Endothelial cell of umbilical vein (primary cell): ENCODE measurements at regions of chr17 and their contacts with region 1.

Region 1: GRCh38 chr17:32755045-32755805 is 121.7 kb downstream of the MYO1D start:
- DNase-seq: peak; percentile 84
- H3K4me3 ChIP-seq: no peak overlapping the region
- H3K27ac ChIP-seq: no peak overlapping the region
- H3K4me1 ChIP-seq: no peaks in the 10 kb centered on the region
- H3K27me3 ChIP-seq: no peaks in the 10 kb centered on the region
- CTCF ChIP-seq: peak; percentile 26 to 37
- POLR2A ChIP-seq: no peak

Region 2: GRCh38 chr17:32461853-32462617 is 293.2 kb before region 1 on chr17:
- CTCF ChIA-PET with region 1: interaction called, 37 read pairs
- POLR2A ChIA-PET with region 1: no interaction called
- dilution Hi-C with region 1: no loop called
- intact Hi-C with region 1: loop called (anchors 1 kb)
- DNase-seq: peak; percentile 69
- H3K4me3 ChIP-seq: no peak overlapping the region
- H3K27ac ChIP-seq: no peak overlapping the region
- H3K4me1 ChIP-seq: no peaks in the 10 kb centered on the region
- H3K27me3 ChIP-seq: no peaks in the 10 kb centered on the region
- CTCF ChIP-seq: peak; percentile 59 to 67
- POLR2A ChIP-seq: no peak

Region 3: GRCh38 chr17:32769839-32770238 is 14.6 kb after region 1 on chr17:
- CTCF ChIA-PET with region 1: interaction called, 12 read pairs
- POLR2A ChIA-PET with region 1: no interaction called
- dilution Hi-C with region 1: no loop called
- intact Hi-C with region 1: no loop called
- DNase-seq: no peak
- H3K4me3 ChIP-seq: no peak overlapping the region
- H3K27ac ChIP-seq: no peak overlapping the region
- H3K4me1 ChIP-seq: peaks cover 24% of the 10 kb centered on the region
- H3K27me3 ChIP-seq: no peaks in the 10 kb centered on the region
- CTCF ChIP-seq: no peak
- POLR2A ChIP-seq: no peak